PC-9 (cell line): ENCODE measurements at regions of chr21 and their contacts with region 1.

Region 1: GRCh38 chr21:41726945-41727783 is 39.7 kb downstream of the RIPK4 start:
- DNase-seq: peak; percentile 89 to 93
- H3K4me3 ChIP-seq: peak overlapping the region; percentile 27; the same call in 1 of the 2 replicates
- H3K27ac ChIP-seq: peak overlapping the region; percentile 93
- H3K4me1 ChIP-seq: peaks cover 56% of the 10 kb centered on the region
- H3K27me3 ChIP-seq: no peaks in the 10 kb centered on the region
- CTCF ChIP-seq: peak; percentile 37; the same call in 1 of the 2 replicates

Region 2: DNA sequence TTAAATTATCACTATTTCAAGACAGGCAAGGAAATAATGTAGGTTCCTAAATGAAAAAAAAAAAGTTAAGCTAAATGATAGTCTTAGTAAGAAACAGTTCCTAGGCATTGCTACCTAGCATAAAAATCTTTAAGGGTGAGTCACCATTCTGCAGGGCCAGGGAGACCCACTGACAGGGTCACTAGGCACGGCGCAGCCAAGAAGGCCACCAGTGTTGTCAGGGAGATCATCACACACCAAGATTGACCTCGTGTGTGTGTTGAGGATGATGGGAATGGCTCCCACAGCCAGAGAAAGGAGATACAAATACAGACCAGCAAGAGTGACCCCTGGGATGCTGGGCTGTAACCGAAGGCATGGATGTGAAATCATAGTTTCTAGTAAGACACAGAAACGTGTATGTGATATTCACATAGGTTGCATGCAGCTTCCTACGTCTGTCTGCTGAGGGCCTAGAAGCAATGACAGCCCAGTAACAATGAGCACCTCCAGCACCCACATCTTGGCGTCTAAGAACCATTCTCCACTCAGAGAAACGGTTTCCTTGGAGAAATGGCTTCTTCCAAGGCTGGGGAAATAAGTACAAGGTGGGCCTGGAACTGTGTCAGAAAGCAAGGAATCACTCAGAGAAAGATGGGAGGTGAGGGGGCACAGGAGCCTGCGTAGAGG is 10.6 kb after region 1 on chr21:
- CTCF ChIA-PET with region 1: no interaction called
- POLR2A ChIA-PET with region 1: interaction called, 11 read pairs
- intact Hi-C with region 1: no loop called
- DNase-seq: no peak
- H3K4me3 ChIP-seq: no peak overlapping the region
- H3K27ac ChIP-seq: peak overlapping the region; percentile 44
- H3K4me1 ChIP-seq: peaks cover 10% of the 10 kb centered on the region
- H3K27me3 ChIP-seq: no peaks in the 10 kb centered on the region
- CTCF ChIP-seq: no peak

Region 3: DNA sequence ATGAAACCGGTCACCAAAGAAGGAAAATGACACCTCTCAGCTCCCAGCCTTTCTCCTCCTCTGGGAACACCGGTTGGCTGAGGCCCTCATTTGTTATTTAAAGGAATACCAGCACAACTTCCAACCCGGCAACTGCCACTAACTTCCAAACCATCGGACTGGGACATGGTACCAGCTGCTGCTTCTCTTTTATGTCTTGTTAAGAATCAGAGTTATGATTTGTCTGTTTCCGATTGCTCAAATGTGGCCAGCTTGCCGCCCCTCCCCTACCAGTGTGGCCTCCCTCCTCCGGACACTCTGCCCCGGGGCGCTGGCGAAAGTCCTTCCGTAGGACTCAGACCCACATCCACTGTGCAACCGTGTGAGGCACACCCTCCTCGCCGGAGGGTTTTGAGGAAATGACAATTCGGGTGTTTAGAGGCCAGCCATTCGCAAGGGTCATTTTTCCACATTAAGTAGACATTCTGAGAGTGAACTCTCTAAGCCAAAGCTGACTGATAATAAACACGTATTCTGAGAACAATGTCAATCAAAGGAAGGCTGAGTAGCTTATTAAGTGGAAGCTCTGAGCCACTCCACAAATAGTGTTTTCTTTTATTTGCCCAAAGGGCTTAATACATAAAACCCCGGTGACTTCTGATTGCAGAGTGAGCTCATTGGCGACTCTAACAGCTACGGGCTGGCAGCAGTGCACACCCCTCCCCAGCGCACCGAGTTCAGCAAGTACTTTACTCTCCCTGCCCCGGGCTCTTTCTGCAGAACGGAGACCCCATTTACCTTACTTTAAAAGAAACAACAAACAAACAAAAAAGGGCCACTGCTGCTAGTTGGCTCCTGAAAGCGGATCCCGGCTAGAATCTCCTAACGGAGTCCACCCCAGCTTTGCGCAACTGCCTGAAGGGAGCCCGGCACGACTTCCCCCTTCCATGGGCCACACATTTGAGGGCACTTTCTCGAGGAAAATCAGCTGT is 34.3 kb after region 1 on chr21:
- CTCF ChIA-PET with region 1: no interaction called
- POLR2A ChIA-PET with region 1: interaction called, 4 read pairs
- intact Hi-C with region 1: loop called (anchors 2 kb)
- DNase-seq: peak; percentile 87 to 91
- H3K4me3 ChIP-seq: peak overlapping the region; percentile 100
- H3K27ac ChIP-seq: peak overlapping the region; percentile 99
- H3K4me1 ChIP-seq: peaks cover 44% of the 10 kb centered on the region
- H3K27me3 ChIP-seq: no peaks in the 10 kb centered on the region
- CTCF ChIP-seq: no peak

Region 4: GRCh38 chr21:41802684-41803083 is 75.5 kb after region 1 on chr21:
- CTCF ChIA-PET with region 1: no interaction called
- POLR2A ChIA-PET with region 1: no interaction called
- intact Hi-C with region 1: no loop called
- DNase-seq: no peak
- H3K4me3 ChIP-seq: no peak overlapping the region
- H3K27ac ChIP-seq: no peak overlapping the region
- H3K4me1 ChIP-seq: no peaks in the 10 kb centered on the region
- H3K27me3 ChIP-seq: no peaks in the 10 kb centered on the region
- CTCF ChIP-seq: no peak